K562 (cell line): ENCODE measurements at regions of chrX and their contacts with region 1.

Region 1: GRCh38 chrX:106894392-106894909 is 8.7 kb downstream of the RIPPLY1 start:
- DNase-seq: peak; percentile 44 to 64 (median 56)
- ATAC-seq: peak; percentile 93
- H3K4me3 ChIP-seq: no peak overlapping the region
- H3K27ac ChIP-seq: no peak overlapping the region
- H3K4me1 ChIP-seq: no peaks in the 10 kb centered on the region
- H3K27me3 ChIP-seq: no peaks in the 10 kb centered on the region
- CTCF ChIP-seq: peak; percentile 75 to 81 (median 79)
- EP300 ChIP-seq: no peak
- POLR2A ChIP-seq: no peak
- RAD21 ChIP-seq: peak; percentile 43 to 68

Region 2: DNA sequence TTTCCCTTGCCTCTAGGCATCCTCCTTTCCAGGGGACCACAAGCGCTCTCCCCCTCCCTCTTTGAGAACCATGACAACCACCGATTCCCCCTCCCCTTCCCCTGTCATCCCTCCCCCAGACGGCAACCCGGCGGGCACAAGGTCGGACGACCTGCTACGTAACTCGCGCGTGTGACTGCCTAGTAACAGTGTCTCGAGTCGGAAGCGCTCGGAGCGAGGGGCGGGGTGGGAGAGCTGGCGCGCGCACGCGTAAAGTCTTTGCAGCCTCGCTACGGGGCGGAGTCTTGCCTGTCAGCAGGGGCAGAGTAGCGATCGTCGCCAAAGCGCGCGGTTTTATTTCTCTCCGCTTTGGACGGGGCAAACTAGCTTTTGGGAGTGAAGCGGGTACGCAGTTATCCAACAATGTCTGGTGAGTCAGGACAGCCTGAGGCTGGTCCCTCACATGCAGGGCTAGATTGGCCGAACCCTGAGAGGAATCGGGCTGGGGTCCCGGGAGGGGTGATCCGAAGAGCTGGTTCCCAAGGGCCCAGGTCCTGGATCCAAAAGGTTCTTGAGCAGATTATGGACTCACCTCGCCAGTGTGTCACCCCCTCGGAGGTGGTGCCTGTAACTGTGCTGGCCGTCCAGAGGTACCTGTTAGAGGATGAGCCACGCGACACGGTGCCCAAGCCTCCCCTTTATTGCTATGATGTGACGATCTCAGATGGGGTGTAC is 282.6 kb before region 1 on chrX and contains the start of gene RADX:
- CTCF ChIA-PET with region 1: no interaction called
- POLR2A ChIA-PET with region 1: no interaction called
- in situ Hi-C with region 1: no loop called
- intact Hi-C with region 1: no loop called
- DNase-seq: peak in 3 of 4 experiments; percentile 9 to 36 (median 14)
- ATAC-seq: peak; percentile 90
- H3K4me3 ChIP-seq: no peak within 1 kb of the TSS
- H3K27ac ChIP-seq: no peak within 1 kb of the TSS
- H3K4me1 ChIP-seq: peaks cover 0 to 3% of the 10 kb centered on the region in 2 experiments; a peak in 1 of 5 replicates
- H3K27me3 ChIP-seq: no peaks in the 10 kb centered on the region
- CTCF ChIP-seq: no peak
- EP300 ChIP-seq: no peak
- POLR2A ChIP-seq: no peak
- RAD21 ChIP-seq: no peak
- polyA plus RNA-seq, gene RADX: 0.03 to 0.14 TPM

Region 3: DNA sequence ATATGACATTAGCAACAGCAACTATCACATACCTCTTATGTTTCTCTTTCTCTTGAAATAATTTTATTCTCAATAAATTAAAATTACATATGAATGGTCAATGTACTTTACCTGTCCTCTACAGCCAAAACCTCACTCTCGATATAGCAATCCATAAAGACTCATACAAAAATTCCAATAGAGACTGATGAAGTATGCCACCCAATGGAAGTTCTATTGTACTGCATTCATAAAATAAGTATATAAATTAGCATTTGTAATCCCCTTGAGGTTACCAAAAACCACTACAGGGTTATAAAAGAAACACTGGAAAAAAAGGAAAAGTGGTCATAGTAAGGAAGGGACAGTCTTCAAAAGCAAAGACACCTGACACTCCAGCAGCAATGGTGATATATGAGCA is 58.5 kb after region 1 on chrX:
- CTCF ChIA-PET with region 1: interaction called, 3 read pairs
- POLR2A ChIA-PET with region 1: no interaction called
- in situ Hi-C with region 1: no loop called
- intact Hi-C with region 1: loop called (anchors 2 kb)
- DNase-seq: peak in 1 of 4 experiments; percentile 4
- ATAC-seq: no peak
- H3K4me3 ChIP-seq: no peak overlapping the region
- H3K27ac ChIP-seq: no peak overlapping the region
- H3K4me1 ChIP-seq: no peaks in the 10 kb centered on the region
- H3K27me3 ChIP-seq: no peaks in the 10 kb centered on the region
- CTCF ChIP-seq: peak in 2 of 3 experiments; percentile 16 to 36; a peak in 2 of 6 replicates
- EP300 ChIP-seq: no peak
- POLR2A ChIP-seq: no peak
- RAD21 ChIP-seq: peak in 1 of 2 experiments; percentile 43; a peak in 3 of 4 replicates

Region 4: GRCh38 chrX:107025545-107025944 is 131.1 kb after region 1 on chrX:
- CTCF ChIA-PET with region 1: no interaction called
- POLR2A ChIA-PET with region 1: no interaction called
- in situ Hi-C with region 1: no loop called
- intact Hi-C with region 1: loop called (anchors 10 kb)
- DNase-seq: peak; percentile 19 to 38 (median 22)
- ATAC-seq: peak; percentile 77; the same call in 2 of the 3 replicates
- H3K4me3 ChIP-seq: no peak overlapping the region
- H3K27ac ChIP-seq: no peak overlapping the region
- H3K4me1 ChIP-seq: no peaks in the 10 kb centered on the region; a peak in 1 of 5 replicates
- H3K27me3 ChIP-seq: no peaks in the 10 kb centered on the region
- CTCF ChIP-seq: peak; percentile 53 to 78 (median 62)
- EP300 ChIP-seq: no peak
- POLR2A ChIP-seq: no peak
- RAD21 ChIP-seq: peak; percentile 84 to 91

Region 5: DNA sequence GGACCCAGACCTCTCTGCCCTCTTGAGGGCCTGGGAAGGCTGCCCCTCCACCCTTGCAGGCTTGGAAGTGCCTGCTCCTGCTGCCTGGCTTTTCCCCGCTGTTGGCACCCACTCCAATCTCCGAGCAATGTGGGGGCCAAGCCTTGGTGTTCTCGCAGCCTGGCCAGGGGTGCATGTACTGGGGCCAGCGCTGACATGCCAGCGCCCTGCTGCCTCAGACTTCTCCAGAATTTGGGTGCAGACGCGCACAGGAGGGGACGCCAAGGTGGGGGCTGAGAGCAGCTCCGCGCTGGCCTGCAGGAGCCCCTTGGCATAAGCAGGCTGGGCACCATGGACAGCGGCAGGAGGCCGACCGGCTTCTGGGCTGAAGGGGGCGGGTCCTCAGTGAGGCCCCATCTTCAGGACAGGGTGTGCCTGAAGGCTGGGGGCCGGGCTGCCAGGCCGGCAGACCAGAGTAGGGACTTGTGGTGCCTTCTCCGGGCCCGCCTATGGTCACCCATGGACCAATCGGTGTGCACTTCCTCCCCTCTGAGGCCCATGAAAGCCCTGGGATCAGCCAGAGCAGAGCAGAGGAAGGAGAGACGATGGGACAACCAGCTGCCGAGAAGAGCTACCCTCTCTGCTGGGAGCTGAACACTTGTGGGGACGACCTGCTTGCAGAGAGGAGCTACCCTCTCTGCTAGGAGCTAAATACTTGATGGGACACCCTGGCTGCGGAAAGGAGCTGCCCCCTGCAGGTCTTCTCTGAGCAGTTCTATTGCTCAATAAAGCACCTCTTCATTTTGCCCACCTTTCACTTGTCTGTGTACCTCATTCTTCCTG is 430.3 kb after region 1 on chrX:
- CTCF ChIA-PET with region 1: no interaction called
- POLR2A ChIA-PET with region 1: no interaction called
- in situ Hi-C with region 1: no loop called
- intact Hi-C with region 1: loop called (anchors 5 kb)
- DNase-seq: peak; percentile 9 to 44 (median 27)
- ATAC-seq: peak; percentile 83
- H3K4me3 ChIP-seq: no peak overlapping the region
- H3K27ac ChIP-seq: no peak overlapping the region
- H3K4me1 ChIP-seq: peaks cover 0 to 13% of the 10 kb centered on the region in 2 experiments; a peak in 2 of 5 replicates
- H3K27me3 ChIP-seq: no peaks in the 10 kb centered on the region
- CTCF ChIP-seq: peak; percentile 43 to 57 (median 52)
- EP300 ChIP-seq: no peak
- POLR2A ChIP-seq: no peak
- RAD21 ChIP-seq: peak in 1 of 2 experiments; percentile 67; a peak in 3 of 4 replicates

Region 6: DNA sequence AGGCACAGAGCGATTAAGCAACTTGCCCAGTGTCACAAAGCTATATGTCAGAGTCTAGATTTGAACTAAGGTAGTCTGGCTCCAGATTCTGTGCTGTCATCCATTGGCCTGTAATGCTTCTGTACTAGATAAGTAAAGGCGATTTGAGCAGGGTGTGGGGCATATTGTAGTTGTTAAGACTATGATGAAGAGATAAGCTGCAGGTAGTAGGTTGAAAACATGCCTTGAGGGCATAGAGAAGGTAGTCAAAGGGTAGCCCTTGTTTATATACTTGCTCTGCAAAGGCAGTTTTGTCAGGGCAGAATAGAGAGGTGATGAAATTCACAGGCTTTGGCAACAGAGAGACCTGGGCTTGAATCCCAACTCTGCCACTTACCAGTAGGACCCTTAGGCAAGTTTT is 545.0 kb after region 1 on chrX:
- CTCF ChIA-PET with region 1: no interaction called
- POLR2A ChIA-PET with region 1: no interaction called
- in situ Hi-C with region 1: no loop called
- intact Hi-C with region 1: loop called (anchors 10 kb)
- DNase-seq: no peak
- ATAC-seq: no peak
- H3K4me3 ChIP-seq: no peak overlapping the region
- H3K27ac ChIP-seq: no peak overlapping the region
- H3K4me1 ChIP-seq: no peaks in the 10 kb centered on the region
- H3K27me3 ChIP-seq: no peaks in the 10 kb centered on the region; a peak in 1 of 5 replicates
- CTCF ChIP-seq: no peak
- EP300 ChIP-seq: no peak
- POLR2A ChIP-seq: no peak
- RAD21 ChIP-seq: no peak

Region 7: GRCh38 chrX:107654872-107655761 is 760.7 kb after region 1 on chrX:
- CTCF ChIA-PET with region 1: no interaction called
- POLR2A ChIA-PET with region 1: no interaction called
- in situ Hi-C with region 1: no loop called
- intact Hi-C with region 1: loop called (anchors 10 kb)
- DNase-seq: peak; percentile 57 to 75 (median 64)
- ATAC-seq: peak; percentile 95
- H3K4me3 ChIP-seq: peak overlapping the region; percentile 24; the same call in 1 of the 2 replicates
- H3K27ac ChIP-seq: peak overlapping the region; percentile 38; the same call in 1 of the 3 replicates
- H3K4me1 ChIP-seq: peaks cover 7 to 8% of the 10 kb centered on the region in 2 experiments; a peak in 3 of 5 replicates
- H3K27me3 ChIP-seq: no peaks in the 10 kb centered on the region
- CTCF ChIP-seq: peak; percentile 71 to 85 (median 83)
- EP300 ChIP-seq: no peak
- POLR2A ChIP-seq: no peak
- RAD21 ChIP-seq: peak; percentile 15 to 39; a peak in 2 of 4 replicates

Region 8: DNA sequence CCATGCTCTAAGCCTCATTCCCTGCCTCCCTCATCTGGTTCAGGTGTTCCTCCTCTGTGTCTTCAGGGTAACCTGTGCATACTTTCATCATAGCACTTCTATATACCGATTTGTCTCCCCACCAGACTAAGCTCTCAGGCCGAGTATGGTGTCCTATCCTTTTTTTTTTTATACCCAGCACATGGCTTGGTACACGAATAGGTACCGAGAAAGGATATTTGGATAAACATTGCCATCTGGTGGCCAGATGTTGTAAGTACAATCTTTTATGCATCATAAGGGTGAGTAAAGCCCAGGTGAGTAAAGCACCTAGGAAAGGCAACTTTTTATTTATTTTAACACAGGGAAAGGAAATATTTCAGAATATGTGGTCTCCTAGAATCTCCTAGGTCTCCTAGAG is 999.6 kb after region 1 on chrX:
- CTCF ChIA-PET with region 1: interaction called, 3 read pairs
- POLR2A ChIA-PET with region 1: no interaction called
- in situ Hi-C with region 1: loop called (anchors 25 kb)
- intact Hi-C with region 1: loop called (anchors 5 kb)
- DNase-seq: peak; percentile 36 to 50 (median 44)
- ATAC-seq: peak; percentile 84
- H3K4me3 ChIP-seq: no peak overlapping the region
- H3K27ac ChIP-seq: no peak overlapping the region
- H3K4me1 ChIP-seq: no peaks in the 10 kb centered on the region
- H3K27me3 ChIP-seq: no peaks in the 10 kb centered on the region
- CTCF ChIP-seq: peak; percentile 44 to 50 (median 46); a peak in 4 of 6 replicates
- EP300 ChIP-seq: no peak
- POLR2A ChIP-seq: no peak
- RAD21 ChIP-seq: peak; percentile 65 to 79